AG04449 (cell line): ENCODE measurements at regions of chr3 and their contacts with region 1.

Region 1: GRCh38 chr3:42670670-42671069 is 14.7 kb upstream of the KLHL40 start:
- DNase-seq: no peak
- H3K4me3 ChIP-seq: no peak overlapping the region
- CTCF ChIP-seq: no peak

Region 2: DNA sequence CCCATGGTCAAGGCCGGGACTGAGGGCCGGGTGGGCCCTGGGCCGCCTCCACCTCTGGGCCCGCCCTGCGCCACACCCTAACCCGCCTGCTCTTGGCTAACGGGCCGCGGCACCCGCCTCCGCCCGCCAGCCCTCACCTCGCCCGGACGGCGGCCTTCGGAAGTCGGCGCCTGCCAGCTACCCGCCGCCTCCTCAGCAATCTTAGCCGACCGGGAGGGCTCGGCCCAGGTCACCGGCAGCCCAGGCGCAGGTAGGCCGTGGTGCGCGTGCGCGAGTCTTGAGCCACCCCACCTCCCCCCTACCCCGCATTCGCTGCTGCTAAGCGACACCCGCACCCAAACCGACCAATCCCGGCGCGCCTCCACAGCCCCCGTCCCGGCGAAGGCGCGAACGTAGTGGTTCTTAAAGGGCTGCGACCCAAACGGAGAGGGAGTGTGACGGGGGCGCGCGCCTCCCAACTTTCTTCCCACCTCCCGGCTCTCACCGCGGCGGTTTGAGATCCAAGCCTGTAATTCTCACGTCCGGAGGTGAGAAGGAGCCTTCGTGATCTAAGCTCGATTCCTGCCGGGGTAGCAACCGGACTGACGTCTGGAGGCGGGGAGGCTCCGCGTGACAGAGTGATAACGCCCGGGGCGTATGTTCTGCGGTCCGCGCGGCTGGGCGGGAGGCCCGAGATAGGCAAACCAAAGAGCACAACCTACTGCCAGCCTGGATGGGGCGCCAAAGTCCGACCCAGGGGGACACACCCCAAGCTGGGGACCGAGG is 88.8 kb before region 1 on chr3 and contains the start of gene SEC22C:
- CTCF ChIA-PET with region 1: no interaction called
- POLR2A ChIA-PET with region 1: no interaction called
- DNase-seq: peak; percentile 46
- H3K4me3 ChIP-seq: peak within 1 kb of the TSS; percentile 73
- CTCF ChIP-seq: no peak

Region 3: GRCh38 chr3:42613462-42613861 is 57.2 kb before region 1 on chr3:
- CTCF ChIA-PET with region 1: no interaction called
- POLR2A ChIA-PET with region 1: no interaction called
- DNase-seq: no peak
- H3K4me3 ChIP-seq: no peak overlapping the region
- CTCF ChIP-seq: peak; percentile 24

Region 4: GRCh38 chr3:42746455-42747450 is 76.1 kb after region 1 on chr3:
- CTCF ChIA-PET with region 1: interaction called, 11 read pairs
- POLR2A ChIA-PET with region 1: no interaction called
- DNase-seq: no peak
- H3K4me3 ChIP-seq: no peak overlapping the region
- CTCF ChIP-seq: no peak